ENCODE measurements at regions of chr1 and their contacts with region 1.

Region 1: DNA sequence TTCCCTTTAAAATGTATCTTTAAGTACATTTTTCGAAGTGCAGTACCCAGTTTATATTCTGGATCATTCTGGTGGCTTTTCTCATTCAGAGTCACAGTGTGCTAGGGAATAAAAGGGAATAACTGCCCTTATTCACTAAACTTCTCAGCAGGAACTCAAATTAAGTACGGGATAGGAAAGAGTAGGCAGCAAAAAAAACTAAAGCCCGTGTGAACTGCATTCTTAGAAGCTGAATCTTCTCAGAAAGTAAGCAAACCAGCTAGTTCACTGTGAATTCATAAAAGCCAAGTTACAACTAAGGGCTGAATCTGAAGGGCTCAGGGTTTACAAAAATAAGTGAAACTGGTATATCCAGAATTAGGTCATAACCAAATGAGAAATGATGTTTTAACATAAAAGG is 22.0 kb downstream of the PRPF38A start:
- DNase-seq: no peak
- H3K4me3 ChIP-seq: no peak overlapping the region
- CTCF ChIP-seq: no peak
- POLR2A ChIP-seq: no peak

Region 2: GRCh38 chr1:50936321-50936720 is 1490.0 kb before region 1 on chr1:
- intact Hi-C with region 1: loop called (anchors 5 kb)
- DNase-seq: no peak
- H3K4me3 ChIP-seq: no peak overlapping the region
- CTCF ChIP-seq: no peak
- POLR2A ChIP-seq: no peak

Region 3: DNA sequence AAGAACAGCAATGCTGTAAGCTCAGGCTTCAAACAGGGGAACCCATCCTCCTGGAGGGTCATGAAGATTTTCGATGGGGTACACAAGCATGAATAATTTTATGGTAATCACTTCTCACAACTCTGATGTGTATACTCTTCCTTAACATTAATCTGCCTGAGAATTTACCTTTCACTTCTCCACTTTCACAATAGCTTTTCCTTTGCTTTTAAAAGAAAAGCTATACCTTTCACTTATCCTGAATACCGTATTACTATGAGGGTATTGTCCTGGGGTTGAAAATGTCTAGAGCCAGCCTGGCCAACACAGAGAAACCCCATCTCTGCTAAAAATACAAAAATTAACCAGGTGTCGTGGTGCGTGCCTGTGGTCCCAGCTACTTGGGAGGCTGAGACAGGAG is 287.2 kb after region 1 on chr1:
- intact Hi-C with region 1: no loop called
- DNase-seq: peak in 1 of 2 donors; percentile 21
- H3K4me3 ChIP-seq: no peak overlapping the region
- CTCF ChIP-seq: no peak
- POLR2A ChIP-seq: no peak

Region 4: DNA sequence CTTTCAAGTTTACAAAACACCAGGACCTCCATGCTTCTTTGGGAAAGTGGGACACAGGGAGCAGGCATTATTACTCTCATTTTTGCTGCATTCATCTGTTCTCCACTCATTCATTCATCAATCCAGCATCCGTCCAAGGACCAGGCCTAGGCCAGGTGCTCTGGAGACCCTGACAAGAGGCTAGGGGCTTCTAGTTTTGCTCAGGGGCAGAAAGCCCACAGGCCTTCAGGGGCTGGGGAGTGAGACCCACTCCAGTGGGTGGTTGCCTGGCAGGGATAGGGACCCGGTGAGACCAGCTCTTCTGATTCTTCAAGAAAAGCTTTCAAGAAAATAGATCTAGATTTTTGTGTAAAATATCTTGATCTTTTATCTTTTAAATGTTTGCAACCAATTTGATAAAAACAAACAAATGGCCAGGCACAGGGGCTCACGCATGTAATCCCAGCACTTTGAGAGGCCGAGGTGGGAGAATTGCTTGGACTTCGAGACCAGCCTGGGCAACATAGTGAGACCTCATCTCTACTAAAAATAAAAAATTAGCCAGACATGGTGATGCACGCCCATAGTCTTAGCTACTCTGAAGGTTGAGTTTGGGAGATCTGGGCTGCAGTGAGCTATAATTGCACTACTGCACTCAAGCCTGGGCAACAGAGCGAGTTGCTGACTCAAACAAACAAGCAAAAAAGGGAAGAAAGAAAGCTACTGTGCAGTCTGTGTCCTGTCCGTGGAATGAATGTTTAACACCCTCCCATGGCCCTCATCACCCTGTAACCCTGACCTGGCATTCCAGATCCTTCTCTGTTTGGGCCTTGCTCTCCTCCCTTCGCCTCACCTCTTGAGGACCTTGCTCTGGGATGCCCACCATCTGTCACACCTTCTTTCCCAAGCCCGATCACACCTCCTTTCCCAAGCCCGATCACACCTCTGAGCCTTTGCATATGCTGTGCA is 918.8 kb after region 1 on chr1:
- intact Hi-C with region 1: no loop called
- DNase-seq: peak in 1 of 2 donors; percentile 64
- H3K4me3 ChIP-seq: no peak overlapping the region
- CTCF ChIP-seq: no peak
- POLR2A ChIP-seq: no peak